ENCODE measurements at regions of chr1 and their contacts with region 1.

Region 1: DNA sequence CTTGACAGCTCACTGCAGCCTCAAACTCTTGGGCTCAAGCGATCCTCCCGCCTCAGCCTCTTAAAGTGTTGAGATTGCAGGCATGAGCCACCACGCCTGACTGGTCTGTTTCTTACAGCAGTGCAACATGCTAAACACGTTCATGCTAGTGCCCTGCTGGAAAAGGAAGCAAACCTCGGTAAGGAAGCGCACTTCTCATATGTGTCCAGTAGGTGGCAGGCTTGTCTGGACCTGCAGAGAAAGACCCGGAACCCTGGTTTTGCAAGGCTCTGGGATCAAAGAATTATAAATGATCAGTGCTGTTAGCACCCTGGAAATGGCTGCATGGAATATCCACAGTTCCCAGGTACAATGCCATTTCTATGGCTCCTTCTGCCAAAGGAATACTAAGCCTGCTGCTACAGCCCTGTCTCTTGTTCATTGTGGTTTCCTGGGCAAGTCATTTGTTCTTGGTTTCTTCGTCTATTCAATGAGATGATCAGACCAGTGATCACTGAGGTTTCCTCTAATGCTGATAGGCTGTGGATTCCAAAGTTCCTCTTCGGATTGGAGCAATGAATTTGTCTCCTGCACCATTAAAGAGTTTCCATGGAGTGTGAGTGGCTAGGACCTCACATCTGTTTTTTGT is 15.9 kb downstream of the RNU5D-1 start:
- DNase-seq: peak; percentile 81
- H3K4me3 Mint-ChIP-seq: peak overlapping the region; percentile 32
- H3K27ac Mint-ChIP-seq: peak overlapping the region; percentile 21
- H3K4me1 Mint-ChIP-seq: peaks cover 47% of the 10 kb centered on the region
- H3K27me3 Mint-ChIP-seq: no peaks in the 10 kb centered on the region

Region 2: DNA sequence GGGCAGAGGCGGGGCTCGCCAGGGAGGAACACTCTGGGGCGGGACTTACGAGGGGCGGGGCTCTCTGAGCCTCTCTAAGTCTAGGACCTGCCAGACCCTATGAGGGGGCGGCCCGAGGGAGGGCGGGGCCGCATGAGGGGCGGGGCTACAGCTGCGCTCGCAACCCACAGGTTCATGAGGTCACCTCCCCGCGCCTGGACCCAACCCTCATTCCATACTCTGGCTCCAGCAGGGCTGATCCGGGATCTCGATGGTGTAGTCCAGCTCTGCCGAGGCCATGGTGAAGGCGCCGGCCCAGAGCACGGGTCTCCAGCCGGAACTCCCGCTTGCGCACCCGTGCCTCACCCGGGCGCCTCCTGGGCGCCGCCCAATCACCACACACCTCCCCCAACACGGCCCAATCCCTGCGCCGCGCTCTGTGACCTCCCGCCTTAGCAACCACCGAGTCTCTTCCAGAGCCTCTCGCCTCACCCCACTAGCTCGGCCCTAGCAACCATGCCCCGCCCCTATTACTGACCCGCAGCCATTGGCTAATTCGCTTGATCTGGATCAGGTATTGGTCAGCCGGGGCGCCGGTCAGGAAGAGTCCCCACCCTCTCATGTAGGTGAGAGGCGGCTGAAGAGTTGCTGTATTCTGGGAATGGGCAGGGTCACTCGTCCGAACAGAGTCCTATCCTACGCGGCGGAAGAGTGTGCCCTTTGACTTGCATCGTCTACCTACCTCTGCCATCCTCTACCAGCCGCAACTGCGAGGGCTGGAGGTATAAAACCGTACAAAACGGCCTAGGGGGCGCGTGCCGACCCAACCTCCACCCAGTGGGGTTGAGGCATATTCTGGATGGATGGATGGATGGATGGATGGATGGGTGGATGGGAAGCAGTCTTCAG is 40.7 kb before region 1 on chr1 and contains the starts of genes ARMH1 and TMEM53:
- CTCF ChIA-PET with region 1: interaction called, 7 read pairs
- intact Hi-C with region 1: loop called (anchors 2 kb)
- DNase-seq: peak; percentile 99
- H3K4me3 Mint-ChIP-seq: peak within 1 kb of the TSS; percentile 82
- H3K27ac Mint-ChIP-seq: peak within 1 kb of the TSS; percentile 78
- H3K4me1 Mint-ChIP-seq: peaks cover 18% of the 10 kb centered on the region
- H3K27me3 Mint-ChIP-seq: no peaks in the 10 kb centered on the region
- total RNA-seq, gene ARMH1: 143 to 155 TPM
- total RNA-seq, gene TMEM53: 4.5 to 4.9 TPM